Right ventricle myocardium inferior (tissue), 1 donor: ENCODE measurements at regions of chr3 and their contacts with region 1.

Region 1: DNA sequence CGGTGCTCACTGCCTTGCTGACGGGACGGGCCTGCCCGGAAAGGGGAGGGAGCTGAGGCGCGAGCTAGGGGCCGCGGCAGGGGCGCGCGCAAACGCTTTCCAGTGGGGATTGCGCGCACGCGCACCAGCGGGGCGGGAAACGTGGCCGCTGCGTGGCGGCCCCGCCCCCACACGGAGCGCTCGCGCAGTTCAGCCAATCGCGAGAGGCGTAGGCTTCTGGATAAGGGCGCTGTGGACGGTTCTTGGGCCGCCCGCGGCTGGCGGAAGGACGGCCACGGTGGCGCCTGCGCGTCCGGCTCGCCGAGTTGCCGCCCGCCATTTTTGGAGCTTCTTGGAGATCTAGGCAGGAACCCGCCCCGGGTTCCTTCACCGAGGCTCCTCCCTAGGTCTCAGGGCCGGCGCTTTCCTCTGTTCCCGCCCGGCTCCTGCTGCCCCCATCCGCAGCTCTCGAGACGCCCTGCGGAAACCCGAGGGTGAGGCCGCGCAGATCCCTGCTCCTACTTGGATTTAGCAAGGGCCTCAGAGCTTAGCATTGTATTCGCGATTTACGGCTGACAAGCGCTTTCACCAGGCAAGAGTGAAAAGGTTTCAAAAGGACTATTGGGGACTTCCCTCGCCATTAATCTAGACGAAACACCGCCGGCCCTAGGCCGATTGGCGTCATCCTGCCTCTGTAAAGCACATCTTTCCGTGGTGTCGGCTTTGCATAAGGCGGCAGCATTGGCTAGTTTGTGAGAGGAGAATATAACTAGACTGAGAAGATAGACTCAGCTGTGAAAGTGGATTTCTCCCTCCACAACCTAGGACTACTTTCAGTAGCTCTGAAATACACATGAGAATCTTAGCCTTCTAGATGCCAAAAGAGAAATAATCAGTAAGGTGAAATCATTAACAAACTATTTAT is 496 bp upstream of the STAG1 start:
- DNase-seq: peak; percentile 100
- ATAC-seq: peak; percentile 97

Region 2: GRCh38 chr3:136075218-136075808 is 677.4 kb before region 1 on chr3:
- intact Hi-C with region 1: loop called (anchors 1 kb)
- DNase-seq: no peak
- ATAC-seq: peak; percentile 78

Region 3: GRCh38 chr3:136250226-136250902 is 502.3 kb before region 1 on chr3 and contains the start of gene PCCB:
- intact Hi-C with region 1: loop called (anchors 5 kb)
- DNase-seq: peak; percentile 98
- ATAC-seq: peak; percentile 99
- total RNA-seq, gene PCCB: 98.6 TPM

Region 4: GRCh38 chr3:136818769-136819391 is 66.2 kb after region 1 on chr3 and contains the start of gene SLC35G2:
- intact Hi-C with region 1: loop called (anchors 2 kb)
- DNase-seq: peak; percentile 70
- ATAC-seq: peak; percentile 69
- total RNA-seq, gene SLC35G2: 2.1 TPM

Region 5: DNA sequence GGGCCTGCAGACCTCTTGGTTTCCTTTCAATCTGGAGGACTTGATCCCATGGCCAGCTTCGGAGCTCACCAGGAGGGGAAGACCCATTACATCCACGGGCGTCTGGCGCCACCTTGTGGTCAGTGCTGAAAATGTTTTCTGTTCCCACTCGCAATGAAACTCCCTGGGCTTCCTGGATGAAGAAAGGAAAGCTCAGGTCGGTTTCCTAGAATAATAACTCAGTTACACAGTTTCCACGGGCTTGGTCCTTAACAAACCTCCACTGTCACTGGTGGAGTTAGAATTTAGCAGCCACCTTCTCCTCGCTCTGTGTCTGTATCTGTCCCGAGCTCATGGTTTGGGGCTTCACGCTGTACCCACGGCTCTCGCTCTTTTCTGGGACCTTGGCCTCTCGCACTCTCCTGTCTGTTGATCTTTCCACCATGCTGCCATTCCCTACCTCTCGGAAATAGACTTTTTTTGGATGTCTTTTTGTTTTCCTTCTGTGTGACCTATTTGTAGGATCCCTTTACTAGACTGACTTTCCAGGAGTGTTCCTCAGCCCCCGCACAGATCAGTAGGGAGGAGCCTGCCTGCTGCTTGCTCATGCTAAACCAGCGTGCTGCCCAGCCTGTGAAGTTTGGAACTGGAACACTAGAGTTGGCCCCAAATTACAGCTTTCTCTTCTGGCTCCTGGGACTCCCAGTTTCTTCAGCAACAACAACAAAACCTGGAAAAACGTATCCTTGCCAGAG is 261.4 kb after region 1 on chr3:
- intact Hi-C with region 1: loop called (anchors 1 kb)
- DNase-seq: peak; percentile 93
- ATAC-seq: peak; percentile 95